ENCODE measurements at regions of chr3 and their contacts with region 1.

Region 1: GRCh38 chr3:194344012-194344411 is 7.1 kb downstream of the CPN2 start:
- DNase-seq: peak; percentile 72 to 87 (median 83)
- H3K4me3 ChIP-seq: no peak overlapping the region
- H3K27ac ChIP-seq: no peak overlapping the region
- H3K4me1 ChIP-seq: no peaks in the 10 kb centered on the region
- H3K27me3 ChIP-seq: no peaks in the 10 kb centered on the region
- CTCF ChIP-seq: peak; percentile 54 to 79 (median 72)
- EP300 ChIP-seq: no peak
- POLR2A ChIP-seq: no peak

Region 2: GRCh38 chr3:194089357-194090177 is 254.4 kb before region 1 on chr3:
- intact Hi-C with region 1: no loop called
- DNase-seq: peak; percentile 82 to 94 (median 87)
- H3K4me3 ChIP-seq: no peak overlapping the region
- H3K27ac ChIP-seq: peak overlapping the region in 1 of 2 donors; percentile 39
- H3K4me1 ChIP-seq: peaks cover 4% of the 10 kb centered on the region
- H3K27me3 ChIP-seq: no peaks in the 10 kb centered on the region
- CTCF ChIP-seq: no peak
- EP300 ChIP-seq: peak; percentile 71
- POLR2A ChIP-seq: no peak

Region 3: DNA sequence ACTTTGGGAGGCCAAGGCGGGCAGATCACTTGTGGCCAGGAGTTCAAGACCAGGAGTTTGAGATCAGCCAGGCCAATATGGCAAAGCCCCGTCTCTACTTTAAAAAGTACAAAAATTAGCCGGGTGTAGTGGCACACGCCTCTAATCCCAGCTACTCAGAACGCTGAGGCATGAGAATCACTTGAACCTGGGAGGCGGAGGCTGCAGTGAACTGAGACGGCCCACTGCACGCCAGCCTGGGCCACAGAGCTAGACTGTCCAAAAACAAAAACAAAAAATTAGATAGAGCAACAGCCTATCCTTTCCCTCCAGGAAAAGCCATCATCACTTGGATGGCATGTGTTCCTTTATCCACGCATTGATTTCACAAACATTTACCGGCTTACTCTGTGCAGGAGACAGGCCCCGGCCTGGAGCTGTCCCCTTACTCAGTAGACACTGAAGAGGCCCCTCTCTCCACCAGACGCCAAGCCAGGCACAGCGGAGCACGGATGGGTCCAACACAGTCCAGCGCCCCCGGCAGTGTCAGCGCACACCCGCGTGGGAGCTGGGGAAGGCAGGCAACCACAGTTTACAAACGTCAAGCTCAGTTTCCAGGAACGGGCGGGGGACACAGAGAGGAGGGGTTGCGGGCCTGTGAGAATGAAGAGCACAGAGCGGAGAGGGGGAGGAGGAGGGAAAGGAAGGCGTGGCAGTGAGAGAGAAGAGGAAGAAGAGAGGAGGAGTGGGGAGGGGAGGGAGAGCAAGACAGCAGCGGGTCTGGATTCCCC is 52.0 kb after region 1 on chr3:
- intact Hi-C with region 1: loop called in 3 of 4 experiments (anchors 5 to 10 kb)
- DNase-seq: peak; percentile 45 to 80 (median 77)
- H3K4me3 ChIP-seq: no peak overlapping the region
- H3K27ac ChIP-seq: peak overlapping the region in 1 of 2 donors; percentile 54
- H3K4me1 ChIP-seq: peaks cover 1% of the 10 kb centered on the region
- H3K27me3 ChIP-seq: no peaks in the 10 kb centered on the region
- CTCF ChIP-seq: no peak
- EP300 ChIP-seq: no peak
- POLR2A ChIP-seq: no peak

Measured in ovary (tissue), 10 donors.